MCF 10A (cell line): ENCODE measurements at regions of chr9 and their contacts with region 1.

Region 1: DNA sequence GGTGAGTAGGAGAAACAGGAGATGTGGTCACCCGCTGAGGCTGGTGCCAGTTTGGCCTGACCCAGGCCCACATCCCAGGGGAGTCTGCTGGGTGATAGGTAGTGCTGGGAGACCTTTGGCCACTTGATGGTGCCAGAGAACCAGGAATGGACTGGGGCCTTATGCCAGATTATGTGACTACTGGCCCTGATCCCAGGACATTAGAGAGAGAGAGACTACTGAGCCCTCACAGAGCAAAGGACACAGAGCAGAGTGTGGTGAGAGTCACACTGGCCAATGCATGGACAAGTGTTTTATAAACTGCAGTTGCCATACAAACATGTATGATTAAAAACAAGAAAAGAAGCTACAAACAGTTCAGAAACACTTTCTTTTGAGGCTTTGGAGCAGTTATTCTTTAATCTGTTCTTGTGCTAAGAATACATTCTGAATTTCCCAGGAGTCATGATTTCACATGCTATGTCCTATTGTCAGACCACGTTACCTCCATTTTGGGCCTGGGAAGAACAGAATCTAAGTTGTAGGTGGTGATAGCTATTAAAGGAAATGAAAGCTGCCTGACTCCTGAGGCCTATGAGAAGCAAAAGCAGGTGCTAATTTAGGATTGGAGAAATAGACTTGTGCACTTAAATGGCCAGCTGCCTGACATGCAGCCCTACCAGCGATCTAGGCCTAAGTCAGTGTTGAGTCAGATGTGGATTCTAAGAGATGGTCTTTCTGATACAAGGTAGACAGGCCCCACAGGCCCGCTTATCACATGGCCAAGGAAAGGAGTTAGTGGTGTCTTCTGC is 32.6 kb upstream of the TMOD1 start:
- DNase-seq: peak; percentile 70
- H3K4me3 Mint-ChIP-seq: no peak overlapping the region
- H3K27ac Mint-ChIP-seq: no peak overlapping the region
- H3K4me1 Mint-ChIP-seq: no peaks in the 10 kb centered on the region
- H3K27me3 Mint-ChIP-seq: no peaks in the 10 kb centered on the region
- CTCF ChIP-seq: peak; percentile 74

Region 2: DNA sequence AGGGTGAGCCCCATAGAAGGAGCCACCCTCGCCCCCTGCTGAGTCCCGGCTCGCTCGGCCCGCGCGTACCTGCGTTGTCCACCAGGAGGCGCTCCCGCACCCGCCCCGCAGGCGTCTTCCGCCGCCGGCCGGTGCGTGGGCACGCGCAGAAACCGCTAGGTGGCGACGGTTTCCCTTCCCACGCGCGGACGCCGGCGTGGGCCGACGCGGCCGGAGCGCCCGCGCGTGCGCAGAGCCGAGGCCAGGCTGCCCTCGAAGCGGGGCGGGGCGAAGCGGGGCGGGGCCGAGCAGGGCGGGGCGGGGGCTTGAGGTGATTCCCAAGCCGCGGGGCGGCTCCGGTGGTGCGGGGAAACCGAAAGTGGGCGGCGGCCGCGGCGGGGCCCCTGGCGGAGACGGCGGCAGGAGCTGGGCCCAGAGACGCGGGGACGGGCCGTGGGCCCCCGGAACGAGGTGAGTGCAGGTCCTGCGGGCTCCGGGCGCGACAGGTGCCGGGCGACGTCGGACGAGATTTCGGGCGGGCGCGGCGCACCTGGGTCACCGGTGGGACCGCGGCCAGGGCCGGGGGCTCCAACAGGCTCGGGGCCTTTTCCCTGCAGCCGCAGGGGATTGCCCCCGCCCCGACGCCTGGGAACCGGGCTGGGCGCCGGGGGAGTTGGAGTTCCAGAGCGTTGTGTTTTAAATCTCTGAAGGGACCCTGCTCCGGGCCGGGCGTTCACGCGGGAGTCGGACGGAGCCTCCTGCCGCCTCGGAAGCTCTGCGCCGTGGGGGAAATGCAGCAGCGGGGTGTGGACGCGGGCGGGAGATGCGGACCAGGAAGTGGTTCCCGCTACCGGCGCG is 56.8 kb before region 1 on chr9 and contains the start of gene TDRD7:
- CTCF ChIA-PET with region 1: interaction called, 10 read pairs
- POLR2A ChIA-PET with region 1: no interaction called
- intact Hi-C with region 1: no loop called
- DNase-seq: peak; percentile 75
- H3K4me3 Mint-ChIP-seq: peak within 1 kb of the TSS; percentile 75
- H3K27ac Mint-ChIP-seq: peak within 1 kb of the TSS; percentile 81
- H3K4me1 Mint-ChIP-seq: peaks cover 12% of the 10 kb centered on the region
- H3K27me3 Mint-ChIP-seq: peaks cover 27% of the 10 kb centered on the region
- CTCF ChIP-seq: peak; percentile 96
- total RNA-seq, gene TDRD7: 7.1 and 8.2 TPM in 2 replicates

Region 3: GRCh38 chr9:97487107-97487506 is 18.3 kb after region 1 on chr9:
- CTCF ChIA-PET with region 1: interaction called, 62 read pairs
- POLR2A ChIA-PET with region 1: interaction called, 3 read pairs
- intact Hi-C with region 1: no loop called
- DNase-seq: peak; percentile 25
- H3K4me3 Mint-ChIP-seq: no peak overlapping the region
- H3K27ac Mint-ChIP-seq: no peak overlapping the region
- H3K4me1 Mint-ChIP-seq: no peaks in the 10 kb centered on the region
- H3K27me3 Mint-ChIP-seq: no peaks in the 10 kb centered on the region
- CTCF ChIP-seq: peak; percentile 16

Region 4: GRCh38 chr9:97510797-97511761 is 42.2 kb after region 1 on chr9:
- CTCF ChIA-PET with region 1: interaction called, 16 read pairs
- POLR2A ChIA-PET with region 1: interaction called, 4 read pairs
- intact Hi-C with region 1: no loop called
- DNase-seq: peak; percentile 67
- H3K4me3 Mint-ChIP-seq: no peak overlapping the region
- H3K27ac Mint-ChIP-seq: peak overlapping the region; percentile 63
- H3K4me1 Mint-ChIP-seq: peaks cover 17% of the 10 kb centered on the region
- H3K27me3 Mint-ChIP-seq: peaks cover 5% of the 10 kb centered on the region
- CTCF ChIP-seq: no peak

Region 5: DNA sequence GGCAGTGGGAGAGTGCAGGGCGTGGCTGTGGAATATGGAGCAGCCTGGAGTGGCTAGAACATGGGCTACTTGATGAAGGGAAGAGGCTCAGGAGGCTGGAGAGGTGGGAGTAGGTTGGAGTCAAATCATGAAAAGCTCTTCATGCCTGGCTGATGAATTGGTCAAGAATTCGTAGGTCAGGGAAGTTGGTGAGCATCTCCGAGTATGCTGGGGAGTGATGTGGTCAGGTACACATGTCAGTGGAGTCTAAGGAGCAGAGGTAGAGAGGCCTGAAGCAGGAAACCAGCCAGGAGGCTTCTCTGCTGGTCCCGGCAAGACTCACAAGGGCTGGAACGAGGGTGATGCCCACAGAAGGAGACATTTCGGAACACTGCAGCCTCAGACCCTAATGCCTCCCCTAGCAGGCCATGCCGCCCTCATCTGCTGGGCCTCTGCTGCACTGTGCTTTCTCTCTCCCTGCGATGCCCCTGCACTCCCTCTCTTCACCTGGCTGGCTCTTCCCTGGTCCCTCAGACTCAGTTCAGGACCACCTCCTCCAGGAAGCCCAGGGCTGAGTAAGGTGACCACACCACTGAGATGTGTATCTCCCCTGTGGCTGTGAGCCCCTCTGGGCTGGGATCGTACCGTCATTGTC is 66.2 kb after region 1 on chr9:
- CTCF ChIA-PET with region 1: interaction called, 10 read pairs
- POLR2A ChIA-PET with region 1: no interaction called
- intact Hi-C with region 1: no loop called
- DNase-seq: no peak
- H3K4me3 Mint-ChIP-seq: no peak overlapping the region
- H3K27ac Mint-ChIP-seq: no peak overlapping the region
- H3K4me1 Mint-ChIP-seq: no peaks in the 10 kb centered on the region
- H3K27me3 Mint-ChIP-seq: peaks cover 24% of the 10 kb centered on the region
- CTCF ChIP-seq: no peak

Region 6: GRCh38 chr9:97615439-97616072 is 146.7 kb after region 1 on chr9:
- CTCF ChIA-PET with region 1: interaction called, 369 read pairs
- POLR2A ChIA-PET with region 1: interaction called, 12 read pairs
- intact Hi-C with region 1: loop called (anchors 2 kb)
- DNase-seq: peak; percentile 71
- H3K4me3 Mint-ChIP-seq: no peak overlapping the region
- H3K27ac Mint-ChIP-seq: no peak overlapping the region
- H3K4me1 Mint-ChIP-seq: peaks cover 7% of the 10 kb centered on the region
- H3K27me3 Mint-ChIP-seq: no peaks in the 10 kb centered on the region
- CTCF ChIP-seq: peak; percentile 54

Region 7: GRCh38 chr9:98158071-98158831 is 689.4 kb after region 1 on chr9:
- CTCF ChIA-PET with region 1: no interaction called
- POLR2A ChIA-PET with region 1: no interaction called
- intact Hi-C with region 1: no loop called
- DNase-seq: peak; percentile 16
- H3K4me3 Mint-ChIP-seq: no peak overlapping the region
- H3K27ac Mint-ChIP-seq: no peak overlapping the region
- H3K4me1 Mint-ChIP-seq: no peaks in the 10 kb centered on the region
- H3K27me3 Mint-ChIP-seq: no peaks in the 10 kb centered on the region
- CTCF ChIP-seq: no peak